Activated CD4-positive, alpha-beta memory T cell treated with anti-CD3 and anti-CD28 coated beads, Interleukin-2, amount 10 ng/mL, durations not matched to agents 7 days and 5 days (primary cell): ENCODE measurements at regions of chr19 and their contacts with region 1.

Region 1: GRCh38 chr19:45439569-45440254 is 16.0 kb upstream of the ERCC1 start:
- DNase-seq: peak; percentile 85
- H3K4me3 Mint-ChIP-seq: peak overlapping the region; percentile 59
- H3K27ac Mint-ChIP-seq: peak overlapping the region; percentile 73
- H3K4me1 Mint-ChIP-seq: peaks cover 36% of the 10 kb centered on the region
- H3K27me3 Mint-ChIP-seq: no peaks in the 10 kb centered on the region

Region 2: GRCh38 chr19:45234089-45234869 is 205.4 kb before region 1 on chr19:
- CTCF ChIA-PET with region 1: no interaction called
- POLR2A ChIA-PET with region 1: no interaction called
- DNase-seq: no peak
- H3K4me3 Mint-ChIP-seq: no peak overlapping the region
- H3K27ac Mint-ChIP-seq: no peak overlapping the region
- H3K4me1 Mint-ChIP-seq: peaks cover 2% of the 10 kb centered on the region
- H3K27me3 Mint-ChIP-seq: peaks cover 16% of the 10 kb centered on the region

Region 3: GRCh38 chr19:45406226-45407090 is 33.3 kb before region 1 on chr19 and contains the start of gene POLR1G:
- CTCF ChIA-PET with region 1: interaction called, 12 read pairs
- POLR2A ChIA-PET with region 1: interaction called, 3 read pairs
- DNase-seq: peak; percentile 82
- H3K4me3 Mint-ChIP-seq: peak within 1 kb of the TSS; percentile 84
- H3K27ac Mint-ChIP-seq: peak within 1 kb of the TSS; percentile 79
- H3K4me1 Mint-ChIP-seq: peaks cover 46% of the 10 kb centered on the region
- H3K27me3 Mint-ChIP-seq: peaks cover 24% of the 10 kb centered on the region
- total RNA-seq, gene POLR1G: 3.6 to 3.8 TPM

Region 4: GRCh38 chr19:45423589-45424190 is 16.0 kb before region 1 on chr19 and contains the start of gene ERCC1:
- CTCF ChIA-PET with region 1: interaction called, 17 read pairs
- POLR2A ChIA-PET with region 1: interaction called, 4 read pairs
- DNase-seq: peak; percentile 92
- H3K4me3 Mint-ChIP-seq: peak within 1 kb of the TSS; percentile 89
- H3K27ac Mint-ChIP-seq: peak within 1 kb of the TSS; percentile 93
- H3K4me1 Mint-ChIP-seq: peaks cover 69% of the 10 kb centered on the region
- H3K27me3 Mint-ChIP-seq: peaks cover 7% of the 10 kb centered on the region
- total RNA-seq, gene ERCC1: 59.8 to 60.6 TPM

Region 5: GRCh38 chr19:45455707-45456499 is 16.2 kb after region 1 on chr19:
- CTCF ChIA-PET with region 1: interaction called, 11 read pairs
- POLR2A ChIA-PET with region 1: interaction called, 10 read pairs
- DNase-seq: peak; percentile 54
- H3K4me3 Mint-ChIP-seq: no peak overlapping the region
- H3K27ac Mint-ChIP-seq: no peak overlapping the region
- H3K4me1 Mint-ChIP-seq: peaks cover 31% of the 10 kb centered on the region
- H3K27me3 Mint-ChIP-seq: peaks cover 6% of the 10 kb centered on the region

Region 6: DNA sequence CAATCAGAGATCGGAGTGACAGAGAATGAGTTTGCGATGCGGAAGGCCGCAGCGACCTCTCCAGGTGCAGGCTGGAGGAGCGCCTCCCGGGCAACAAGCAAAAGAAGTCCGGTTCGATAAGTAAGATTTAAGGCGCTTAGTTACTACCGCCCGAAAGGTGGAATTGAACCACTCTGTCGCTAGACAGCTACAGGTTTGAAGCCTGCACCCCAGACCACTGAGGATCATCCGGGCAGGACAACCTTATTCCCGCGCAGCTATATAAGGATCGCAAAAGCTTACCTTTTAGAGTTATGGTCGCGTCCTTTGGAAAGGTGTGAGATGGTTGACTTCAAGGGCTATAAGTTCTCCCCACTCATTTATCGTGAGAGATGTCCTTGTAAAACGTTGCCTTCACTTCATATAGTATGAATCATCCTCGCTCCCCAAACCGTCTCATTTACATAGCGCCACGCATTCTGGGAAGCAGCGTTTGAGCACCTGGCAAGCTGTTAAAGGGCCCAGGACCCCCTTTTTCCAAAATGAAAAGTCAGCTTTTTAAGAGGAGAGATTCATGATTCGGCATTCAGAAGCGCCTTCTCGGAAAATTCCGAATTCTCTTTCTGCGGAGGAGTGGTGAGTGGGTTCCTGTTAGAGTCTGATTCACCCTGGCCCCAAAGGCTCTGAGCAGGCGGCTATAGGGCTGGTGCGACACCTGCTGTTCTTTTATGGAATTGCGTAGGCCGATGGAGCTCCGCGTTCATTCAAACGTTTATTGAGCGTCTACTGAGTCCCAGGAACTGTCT is 38.9 kb after region 1 on chr19:
- CTCF ChIA-PET with region 1: interaction called, 311 read pairs
- POLR2A ChIA-PET with region 1: interaction called, 73 read pairs
- DNase-seq: peak; percentile 94
- H3K4me3 Mint-ChIP-seq: peak overlapping the region; percentile 61
- H3K27ac Mint-ChIP-seq: peak overlapping the region; percentile 94
- H3K4me1 Mint-ChIP-seq: peaks cover 41% of the 10 kb centered on the region
- H3K27me3 Mint-ChIP-seq: peaks cover 10% of the 10 kb centered on the region